ENCODE measurements at regions of chr1 and their contacts with region 1.

Region 1: GRCh38 chr1:204623894-204624361 is 61.6 kb downstream of the LRRN2 start:
- DNase-seq: no peak
- H3K4me3 ChIP-seq: no peak overlapping the region
- H3K27ac ChIP-seq: no peak overlapping the region
- H3K4me1 ChIP-seq: peaks cover 46% of the 10 kb centered on the region
- H3K27me3 ChIP-seq: peaks cover 3% of the 10 kb centered on the region; the same call in 1 of the 2 replicates
- CTCF ChIP-seq: no peak; the same call in 1 of the 2 replicates

Region 2: DNA sequence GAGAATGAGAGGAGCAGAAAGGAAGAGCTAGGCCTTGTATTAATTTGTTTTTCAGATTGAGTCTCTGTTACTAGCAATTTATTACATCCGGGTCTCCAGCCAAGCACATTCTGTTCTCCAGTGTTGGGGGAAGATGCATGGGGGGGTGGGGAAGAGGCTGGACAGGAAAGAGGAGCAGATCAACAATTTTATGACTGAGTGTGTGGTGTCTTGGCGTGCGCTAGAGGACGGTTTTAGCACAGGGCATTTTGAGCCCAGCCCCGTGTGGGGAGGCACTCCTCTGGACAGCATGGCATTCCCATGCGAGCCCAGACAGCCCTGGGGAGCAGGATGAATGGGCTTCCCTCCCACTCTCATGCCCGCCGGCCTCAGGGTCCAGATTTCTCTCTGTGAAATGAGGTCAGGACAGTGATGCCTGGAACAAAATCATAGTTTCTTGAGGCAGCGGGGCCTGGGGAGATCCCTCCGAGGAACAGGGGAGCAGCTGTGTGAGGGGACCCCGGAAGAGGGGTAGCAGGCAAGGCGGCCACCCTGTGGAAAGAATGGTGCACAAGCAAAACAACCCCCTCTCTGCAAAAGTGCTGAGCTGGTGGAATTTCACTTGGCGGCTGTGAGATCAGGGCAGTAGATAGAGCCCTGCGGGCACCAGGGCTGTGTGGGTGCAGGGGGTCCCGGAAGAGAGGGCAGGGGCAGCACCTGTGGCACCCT is 534.7 kb before region 1 on chr1:
- CTCF ChIA-PET with region 1: no interaction called
- POLR2A ChIA-PET with region 1: no interaction called
- intact Hi-C with region 1: no loop called
- DNase-seq: no peak
- H3K4me3 ChIP-seq: no peak overlapping the region
- H3K27ac ChIP-seq: no peak overlapping the region
- H3K4me1 ChIP-seq: peaks cover 13% of the 10 kb centered on the region
- H3K27me3 ChIP-seq: no peaks in the 10 kb centered on the region
- CTCF ChIP-seq: no peak

Region 3: DNA sequence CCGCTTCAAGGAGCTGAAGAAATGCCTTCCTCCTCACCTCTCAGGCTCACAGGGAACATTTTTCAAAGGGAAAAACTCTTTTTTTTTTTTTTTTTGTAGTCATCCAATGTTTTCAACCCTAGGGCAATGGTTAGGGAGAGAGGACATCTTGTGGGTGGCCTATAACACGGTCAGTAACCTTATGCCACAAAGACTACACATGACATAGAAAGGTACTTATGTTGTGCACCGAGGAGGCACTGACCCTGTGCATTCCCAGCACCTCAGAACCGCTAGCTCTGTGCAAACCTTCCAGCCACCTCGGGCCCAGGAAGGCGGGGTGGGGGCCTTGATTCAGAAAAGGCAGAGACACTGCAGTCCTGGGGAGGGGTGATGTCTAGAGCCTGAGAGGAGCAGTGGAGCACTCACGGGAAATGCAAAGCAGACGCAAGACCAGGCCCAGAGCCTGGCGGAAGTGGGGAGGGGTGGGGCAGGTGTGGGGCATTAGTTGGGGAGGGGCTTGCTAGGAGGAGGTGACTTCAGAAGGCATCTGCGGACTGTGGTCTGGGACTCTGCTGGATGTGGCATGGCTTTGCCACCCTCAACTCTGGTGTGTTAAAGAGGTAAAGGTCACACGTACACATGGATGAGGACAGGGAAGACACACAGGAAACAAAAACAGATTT is 39.1 kb before region 1 on chr1:
- CTCF ChIA-PET with region 1: no interaction called
- POLR2A ChIA-PET with region 1: no interaction called
- intact Hi-C with region 1: loop called (anchors 5 kb)
- DNase-seq: no peak
- H3K4me3 ChIP-seq: no peak overlapping the region
- H3K27ac ChIP-seq: no peak overlapping the region
- H3K4me1 ChIP-seq: peaks cover 21% of the 10 kb centered on the region
- H3K27me3 ChIP-seq: no peaks in the 10 kb centered on the region
- CTCF ChIP-seq: no peak

Region 4: GRCh38 chr1:204711947-204712701 is 88.2 kb after region 1 on chr1:
- CTCF ChIA-PET with region 1: interaction called, 3 read pairs
- POLR2A ChIA-PET with region 1: no interaction called
- intact Hi-C with region 1: loop called (anchors 1 kb)
- DNase-seq: no peak
- H3K4me3 ChIP-seq: no peak overlapping the region
- H3K27ac ChIP-seq: no peak overlapping the region
- H3K4me1 ChIP-seq: peaks cover 9% of the 10 kb centered on the region
- H3K27me3 ChIP-seq: peaks cover 5% of the 10 kb centered on the region; the same call in 1 of the 2 replicates
- CTCF ChIP-seq: no peak

Region 5: GRCh38 chr1:204763706-204764427 is 139.9 kb after region 1 on chr1:
- CTCF ChIA-PET with region 1: interaction called, 3 read pairs
- POLR2A ChIA-PET with region 1: no interaction called
- intact Hi-C with region 1: loop called (anchors 5 kb)
- DNase-seq: peak; percentile 72 to 75
- H3K4me3 ChIP-seq: no peak overlapping the region
- H3K27ac ChIP-seq: no peak overlapping the region
- H3K4me1 ChIP-seq: peaks cover 6% of the 10 kb centered on the region; the same call in 1 of the 2 replicates
- H3K27me3 ChIP-seq: peaks cover 18% of the 10 kb centered on the region
- CTCF ChIP-seq: peak; percentile 82

Region 6: GRCh38 chr1:205300886-205301821 is 677.2 kb after region 1 on chr1:
- CTCF ChIA-PET with region 1: interaction called, 17 read pairs
- POLR2A ChIA-PET with region 1: no interaction called
- intact Hi-C with region 1: no loop called
- DNase-seq: peak; percentile 78 to 85
- H3K4me3 ChIP-seq: peak overlapping the region; percentile 15; the same call in 1 of the 2 replicates
- H3K27ac ChIP-seq: peak overlapping the region; percentile 68
- H3K4me1 ChIP-seq: peaks cover 53% of the 10 kb centered on the region
- H3K27me3 ChIP-seq: no peaks in the 10 kb centered on the region
- CTCF ChIP-seq: no peak